ENCODE measurements at regions of chr2 and their contacts with region 1.

Region 1: DNA sequence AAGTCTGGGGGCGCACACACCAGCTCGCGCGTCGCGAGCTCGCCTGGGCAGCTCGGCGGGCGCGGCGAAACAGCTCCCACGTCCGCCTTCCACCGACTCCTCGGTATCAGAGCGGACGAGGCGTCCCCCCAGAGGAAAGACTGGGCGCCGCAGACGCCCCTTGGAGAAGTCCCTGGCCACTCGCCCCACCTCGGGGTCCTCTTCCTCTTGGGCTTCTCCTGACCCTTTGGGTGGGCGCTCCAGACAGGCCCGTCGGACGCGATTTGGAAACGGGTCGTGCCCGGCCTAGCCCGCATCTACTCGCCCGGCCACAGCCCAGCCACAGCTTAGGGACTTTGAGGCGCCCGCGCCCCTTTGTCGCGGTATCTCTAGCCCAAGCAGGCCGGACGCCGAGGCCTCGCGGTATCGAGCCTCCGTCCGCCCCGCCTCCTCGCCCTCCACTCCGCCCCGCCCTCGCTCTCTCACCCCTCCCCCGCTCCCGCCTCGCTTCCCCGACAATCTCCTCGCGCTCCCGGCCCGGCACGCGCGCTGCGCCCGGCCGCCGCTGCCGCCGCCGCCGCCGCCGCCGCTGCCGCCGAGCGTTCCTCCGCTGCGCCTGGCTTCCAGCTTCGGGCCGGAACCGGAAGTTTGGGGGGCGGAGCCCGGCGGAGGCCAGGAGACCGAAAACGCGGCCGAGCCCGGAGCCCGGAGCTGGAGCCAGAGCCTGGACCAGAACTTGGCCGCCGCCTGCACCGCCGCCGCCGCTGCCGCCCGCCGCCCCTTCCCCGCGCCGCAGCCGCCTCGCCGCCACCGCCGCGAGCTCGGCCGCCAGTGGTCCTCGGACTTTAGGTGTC is 749 bp upstream of the ACVR2A start:
- DNase-seq: peak; percentile 87 to 91 (median 88)
- H3K4me3 ChIP-seq: peak overlapping the region; percentile 49 to 74
- H3K4me3 Mint-ChIP-seq: peak overlapping the region; percentile 93 to 99 (median 97)
- H3K27ac ChIP-seq: peak overlapping the region; percentile 51
- H3K27ac Mint-ChIP-seq: peak overlapping the region; percentile 78 to 99 (median 87)
- H3K4me1 ChIP-seq: peaks cover 38% of the 10 kb centered on the region
- H3K4me1 Mint-ChIP-seq: peaks cover 23 to 50% (median 36%) of the 10 kb centered on the region in 4 donors
- H3K27me3 ChIP-seq: no peaks in the 10 kb centered on the region
- H3K27me3 Mint-ChIP-seq: peaks cover 3 to 5% of the 10 kb centered on the region in 2 donors

Region 2: GRCh38 chr2:147288131-147288530 is 555.9 kb before region 1 on chr2:
- CTCF ChIA-PET with region 1: interaction called, 5 read pairs
- POLR2A ChIA-PET with region 1: interaction called, 4 read pairs
- intact Hi-C with region 1: loop called (anchors 1 kb)
- DNase-seq: peak; percentile 55 to 70 (median 67)
- H3K4me3 ChIP-seq: no peak overlapping the region
- H3K4me3 Mint-ChIP-seq: peak overlapping the region in 6 of 8 donors; percentile 3 to 62 (median 28)
- H3K27ac ChIP-seq: no peak overlapping the region
- H3K27ac Mint-ChIP-seq: peak overlapping the region; percentile 5 to 88 (median 44)
- H3K4me1 ChIP-seq: peaks cover 25% of the 10 kb centered on the region
- H3K4me1 Mint-ChIP-seq: peaks cover 19 to 30% (median 23%) of the 10 kb centered on the region in 4 donors
- H3K27me3 ChIP-seq: no peaks in the 10 kb centered on the region
- H3K27me3 Mint-ChIP-seq: no peaks in the 10 kb centered on the region

Region 3: GRCh38 chr2:147449323-147449991 is 394.6 kb before region 1 on chr2:
- CTCF ChIA-PET with region 1: no interaction called
- POLR2A ChIA-PET with region 1: interaction called, 3 read pairs
- intact Hi-C with region 1: loop called (anchors 5 kb)
- DNase-seq: peak; percentile 73 to 84 (median 80)
- H3K4me3 ChIP-seq: peak overlapping the region in 1 of 2 donors; percentile 3
- H3K4me3 Mint-ChIP-seq: peak overlapping the region; percentile 59 to 82 (median 72)
- H3K27ac ChIP-seq: peak overlapping the region; percentile 84
- H3K27ac Mint-ChIP-seq: peak overlapping the region; percentile 95 to 99 (median 97)
- H3K4me1 ChIP-seq: peaks cover 21% of the 10 kb centered on the region
- H3K4me1 Mint-ChIP-seq: peaks cover 11 to 35% (median 23%) of the 10 kb centered on the region in 4 donors
- H3K27me3 ChIP-seq: no peaks in the 10 kb centered on the region
- H3K27me3 Mint-ChIP-seq: no peaks in the 10 kb centered on the region

Region 4: GRCh38 chr2:147567136-147567535 is 276.9 kb before region 1 on chr2:
- CTCF ChIA-PET with region 1: no interaction called
- POLR2A ChIA-PET with region 1: no interaction called
- intact Hi-C with region 1: no loop called
- DNase-seq: no peak
- H3K4me3 ChIP-seq: no peak overlapping the region
- H3K4me3 Mint-ChIP-seq: no peak overlapping the region
- H3K27ac ChIP-seq: no peak overlapping the region
- H3K27ac Mint-ChIP-seq: no peak overlapping the region
- H3K4me1 ChIP-seq: no peaks in the 10 kb centered on the region
- H3K4me1 Mint-ChIP-seq: no peaks in the 10 kb centered on the region
- H3K27me3 ChIP-seq: no peaks in the 10 kb centered on the region
- H3K27me3 Mint-ChIP-seq: no peaks in the 10 kb centered on the region

Region 5: DNA sequence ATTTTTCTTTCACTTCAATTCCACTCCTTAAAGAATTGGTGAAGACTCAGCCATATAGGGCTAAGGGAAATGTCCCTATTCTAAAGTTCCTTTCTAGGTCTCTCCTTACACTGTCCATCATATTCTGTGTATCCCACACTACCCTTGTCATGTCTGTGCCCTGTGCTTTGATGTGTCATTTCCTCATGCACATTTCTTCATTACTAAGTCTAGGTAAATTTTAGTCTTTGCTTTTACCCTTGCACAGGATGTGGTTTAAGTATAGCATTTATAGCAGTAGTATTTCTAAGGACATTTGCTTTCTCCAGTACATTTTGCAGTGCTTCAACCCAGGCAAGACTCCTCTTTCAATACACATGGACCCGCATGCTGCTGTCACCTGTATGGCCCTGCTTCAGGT is 220.8 kb before region 1 on chr2:
- CTCF ChIA-PET with region 1: no interaction called
- POLR2A ChIA-PET with region 1: interaction called, 3 read pairs
- intact Hi-C with region 1: loop called (anchors 2 kb)
- DNase-seq: peak in 4 of 5 donors; percentile 40 to 56 (median 47)
- H3K4me3 ChIP-seq: no peak overlapping the region
- H3K4me3 Mint-ChIP-seq: peak overlapping the region in 5 of 8 donors; percentile 1 to 60 (median 15)
- H3K27ac ChIP-seq: no peak overlapping the region
- H3K27ac Mint-ChIP-seq: peak overlapping the region in 5 of 7 donors; percentile 1 to 17 (median 2)
- H3K4me1 ChIP-seq: peaks cover 22% of the 10 kb centered on the region
- H3K4me1 Mint-ChIP-seq: peaks cover 6 to 25% (median 17%) of the 10 kb centered on the region in 4 donors
- H3K27me3 ChIP-seq: no peaks in the 10 kb centered on the region
- H3K27me3 Mint-ChIP-seq: no peaks in the 10 kb centered on the region

Region 6: GRCh38 chr2:147696448-147696847 is 147.6 kb before region 1 on chr2:
- CTCF ChIA-PET with region 1: no interaction called
- POLR2A ChIA-PET with region 1: no interaction called
- intact Hi-C with region 1: no loop called
- DNase-seq: no peak
- H3K4me3 ChIP-seq: no peak overlapping the region
- H3K4me3 Mint-ChIP-seq: no peak overlapping the region
- H3K27ac ChIP-seq: no peak overlapping the region
- H3K27ac Mint-ChIP-seq: no peak overlapping the region
- H3K4me1 ChIP-seq: no peaks in the 10 kb centered on the region
- H3K4me1 Mint-ChIP-seq: no peaks in the 10 kb centered on the region
- H3K27me3 ChIP-seq: no peaks in the 10 kb centered on the region
- H3K27me3 Mint-ChIP-seq: no peaks in the 10 kb centered on the region

Region 7: GRCh38 chr2:147863835-147864234 is 19.8 kb after region 1 on chr2:
- CTCF ChIA-PET with region 1: interaction called, 3 read pairs
- POLR2A ChIA-PET with region 1: interaction called, 4 read pairs
- intact Hi-C with region 1: loop called (anchors 2 kb)
- DNase-seq: no peak
- H3K4me3 ChIP-seq: no peak overlapping the region
- H3K4me3 Mint-ChIP-seq: no peak overlapping the region
- H3K27ac ChIP-seq: no peak overlapping the region
- H3K27ac Mint-ChIP-seq: no peak overlapping the region
- H3K4me1 ChIP-seq: peaks cover 68% of the 10 kb centered on the region
- H3K4me1 Mint-ChIP-seq: peaks cover 31 to 50% (median 41%) of the 10 kb centered on the region in 4 donors
- H3K27me3 ChIP-seq: no peaks in the 10 kb centered on the region
- H3K27me3 Mint-ChIP-seq: no peaks in the 10 kb centered on the region

Region 8: DNA sequence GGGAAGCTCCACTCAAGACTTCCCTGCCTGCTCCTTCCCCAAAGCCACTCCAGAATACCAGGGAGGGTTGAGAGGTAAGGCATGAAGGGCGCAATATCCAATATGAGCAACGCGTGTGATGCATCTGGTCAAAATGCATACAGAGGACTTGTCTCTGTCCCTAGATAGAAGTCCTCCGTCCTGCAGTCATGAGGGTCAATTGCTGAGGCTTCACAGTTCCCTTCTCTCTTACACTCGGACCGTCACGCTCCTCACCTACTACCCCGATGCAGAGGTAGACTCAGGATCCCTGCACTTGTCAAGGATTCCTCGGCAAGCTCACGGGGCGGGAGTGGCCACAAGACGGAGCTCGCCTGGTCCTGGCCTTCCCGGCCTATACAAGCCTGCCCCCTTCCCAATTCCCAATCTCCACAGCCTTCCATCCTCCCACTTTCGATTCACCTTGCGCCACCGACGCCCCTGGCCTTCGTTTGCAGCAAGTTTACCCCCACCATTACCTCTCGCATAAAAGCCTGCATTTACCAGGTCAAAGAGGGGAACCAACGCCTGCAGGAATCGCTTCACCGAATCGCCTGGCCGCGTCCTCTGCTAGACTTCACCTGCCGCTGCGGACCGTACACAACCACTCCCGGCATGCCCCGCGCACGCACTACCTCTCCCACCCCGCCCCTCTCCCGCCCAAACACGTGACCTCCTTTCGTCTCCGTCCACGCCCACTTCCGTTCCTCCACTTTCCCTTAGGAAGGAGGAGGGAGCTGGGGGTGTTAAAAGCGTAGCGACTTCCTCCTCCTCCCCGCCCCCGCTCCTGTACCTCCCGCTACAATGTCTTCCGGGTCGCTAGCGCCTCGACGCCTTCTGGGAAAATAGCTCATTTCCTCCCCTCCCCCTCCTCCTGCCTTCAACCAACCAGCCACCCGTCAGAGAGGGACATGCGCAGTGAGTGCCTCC is 176.3 kb after region 1 on chr2 and contains the start of gene ORC4:
- CTCF ChIA-PET with region 1: no interaction called
- POLR2A ChIA-PET with region 1: interaction called, 4 read pairs
- intact Hi-C with region 1: loop called (anchors 2 kb)
- DNase-seq: peak; percentile 94 to 99 (median 97)
- H3K4me3 ChIP-seq: peak within 1 kb of the TSS; percentile 87 to 93
- H3K4me3 Mint-ChIP-seq: peak within 1 kb of the TSS; percentile 92 to 100 (median 99)
- H3K27ac ChIP-seq: peak within 1 kb of the TSS; percentile 89
- H3K27ac Mint-ChIP-seq: peak within 1 kb of the TSS; percentile 85 to 98 (median 97)
- H3K4me1 ChIP-seq: peaks cover 57% of the 10 kb centered on the region
- H3K4me1 Mint-ChIP-seq: peaks cover 44 to 83% (median 63%) of the 10 kb centered on the region in 4 donors
- H3K27me3 ChIP-seq: no peaks in the 10 kb centered on the region
- H3K27me3 Mint-ChIP-seq: no peaks in the 10 kb centered on the region
- total RNA-seq, gene ORC4: 59.4 to 60.1 TPM

Region 9: DNA sequence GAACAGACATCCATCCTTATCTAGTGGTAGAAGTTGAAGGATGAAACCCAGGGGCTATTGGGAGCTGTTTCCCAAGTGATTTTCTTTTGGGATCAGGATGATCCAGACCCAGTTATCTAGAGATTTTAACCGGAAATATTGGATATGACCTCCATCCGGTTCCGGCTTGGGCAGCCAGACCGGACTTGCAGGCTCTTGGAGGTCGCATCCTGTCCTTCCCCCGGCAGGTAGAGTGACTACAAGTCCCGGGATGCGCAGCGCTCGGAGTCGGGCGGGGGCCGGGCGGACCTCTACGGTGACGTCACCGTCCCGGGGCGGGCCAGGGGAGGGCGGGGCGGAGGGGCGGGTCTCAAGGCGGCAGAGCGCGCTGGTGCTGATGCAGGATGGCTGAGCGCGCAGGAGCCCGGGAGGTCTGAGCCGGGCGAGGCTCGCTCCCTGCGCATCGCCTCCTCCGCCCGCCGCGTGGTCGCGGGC is 1030.8 kb after region 1 on chr2 and contains the start of gene KIF5C:
- CTCF ChIA-PET with region 1: no interaction called
- POLR2A ChIA-PET with region 1: no interaction called
- intact Hi-C with region 1: loop called (anchors 10 kb)
- DNase-seq: peak; percentile 78 to 83 (median 81)
- H3K4me3 ChIP-seq: peak within 1 kb of the TSS; percentile 54 to 70
- H3K4me3 Mint-ChIP-seq: peak within 1 kb of the TSS; percentile 90 to 97 (median 92)
- H3K27ac ChIP-seq: peak within 1 kb of the TSS; percentile 47
- H3K27ac Mint-ChIP-seq: peak within 1 kb of the TSS; percentile 78 to 97 (median 92)
- H3K4me1 ChIP-seq: peaks cover 8% of the 10 kb centered on the region
- H3K4me1 Mint-ChIP-seq: peaks cover 6 to 20% (median 15%) of the 10 kb centered on the region in 4 donors
- H3K27me3 ChIP-seq: no peaks in the 10 kb centered on the region
- H3K27me3 Mint-ChIP-seq: peaks cover 6 to 10% of the 10 kb centered on the region in 2 donors
- total RNA-seq, gene KIF5C: 21.1 to 21.3 TPM

Region 10: DNA sequence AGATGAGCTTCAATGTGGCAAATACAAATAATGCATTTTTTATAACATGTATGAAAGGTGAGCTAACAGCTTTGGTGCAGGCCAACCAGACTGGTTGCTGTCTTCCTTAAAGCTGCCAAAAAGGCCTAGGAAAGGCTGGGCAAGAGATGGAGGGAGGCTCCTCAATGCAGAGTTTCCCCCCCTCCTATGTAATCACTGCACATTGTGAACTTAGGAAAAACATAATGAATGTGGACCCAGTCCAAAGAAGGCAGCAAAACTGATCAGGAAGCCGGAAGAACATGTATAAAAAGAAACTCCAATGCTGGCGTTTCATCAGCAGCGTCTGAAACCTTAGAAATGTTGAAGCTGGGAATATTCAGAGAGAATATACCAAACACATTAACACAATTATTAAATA is 1402.1 kb after region 1 on chr2:
- CTCF ChIA-PET with region 1: no interaction called
- POLR2A ChIA-PET with region 1: no interaction called
- intact Hi-C with region 1: no loop called
- DNase-seq: no peak
- H3K4me3 ChIP-seq: no peak overlapping the region
- H3K4me3 Mint-ChIP-seq: no peak overlapping the region
- H3K27ac ChIP-seq: no peak overlapping the region
- H3K27ac Mint-ChIP-seq: no peak overlapping the region
- H3K4me1 ChIP-seq: no peaks in the 10 kb centered on the region
- H3K4me1 Mint-ChIP-seq: no peaks in the 10 kb centered on the region
- H3K27me3 ChIP-seq: no peaks in the 10 kb centered on the region
- H3K27me3 Mint-ChIP-seq: peaks cover 0 to 2% of the 10 kb centered on the region in 2 donors

Measured in CD4-positive, alpha-beta memory T cell (primary cell).